ENCODE measurements at regions of chr22 and their contacts with region 1.

Region 1: GRCh38 chr22:37965940-37966664 is 12.6 kb downstream of the POLR2F start:
- DNase-seq: no peak
- H3K4me3 ChIP-seq: no peak overlapping the region
- H3K27ac ChIP-seq: no peak overlapping the region
- H3K4me1 ChIP-seq: peaks cover 0 to 5% (median 3%) of the 10 kb centered on the region in 4 experiments; a peak in 4 of 7 replicates
- H3K27me3 ChIP-seq: no peaks in the 10 kb centered on the region
- CTCF ChIP-seq: no peak
- EP300 ChIP-seq: no peak
- POLR2A ChIP-seq: no peak
- RAD21 ChIP-seq: no peak

Region 2: GRCh38 chr22:37896181-37896592 is 69.9 kb before region 1 on chr22:
- CTCF ChIA-PET with region 1: interaction called, 10 read pairs
- POLR2A ChIA-PET with region 1: interaction called, 6 read pairs
- DNase-seq: no peak
- H3K4me3 ChIP-seq: no peak overlapping the region
- H3K27ac ChIP-seq: no peak overlapping the region
- H3K4me1 ChIP-seq: peaks cover 16 to 24% (median 20%) of the 10 kb centered on the region in 4 experiments
- H3K27me3 ChIP-seq: no peaks in the 10 kb centered on the region
- CTCF ChIP-seq: no peak
- EP300 ChIP-seq: no peak
- POLR2A ChIP-seq: no peak
- RAD21 ChIP-seq: no peak

Region 3: GRCh38 chr22:37940698-37941376 is 25.3 kb before region 1 on chr22:
- CTCF ChIA-PET with region 1: interaction called, 11 read pairs
- POLR2A ChIA-PET with region 1: interaction called, 8 read pairs
- DNase-seq: no peak
- H3K4me3 ChIP-seq: no peak overlapping the region
- H3K27ac ChIP-seq: no peak overlapping the region
- H3K4me1 ChIP-seq: no peaks in the 10 kb centered on the region
- H3K27me3 ChIP-seq: no peaks in the 10 kb centered on the region
- CTCF ChIP-seq: 0 out of 4 replicates have a peak, but pooled peaks of 1 of the 3 experiments have one; percentile 7
- EP300 ChIP-seq: no peak
- POLR2A ChIP-seq: no peak
- RAD21 ChIP-seq: no peak

Region 4: GRCh38 chr22:37953437-37954179 is 12.5 kb before region 1 on chr22 and contains the starts of genes C22orf23 and POLR2F:
- CTCF ChIA-PET with region 1: interaction called, 48 read pairs
- POLR2A ChIA-PET with region 1: interaction called, 10 read pairs
- DNase-seq: peak; percentile 71 to 96
- H3K4me3 ChIP-seq: peak within 1 kb of the TSS; percentile 85 to 98 (median 94)
- H3K27ac ChIP-seq: peak within 1 kb of the TSS; percentile 66; the same call in 1 of the 2 replicates
- H3K4me1 ChIP-seq: peaks cover 0 to 10% (median 4%) of the 10 kb centered on the region in 4 experiments; a peak in 4 of 7 replicates
- H3K27me3 ChIP-seq: no peaks in the 10 kb centered on the region; a peak in 4 of 7 replicates
- CTCF ChIP-seq: no peak
- EP300 ChIP-seq: no peak
- POLR2A ChIP-seq: peak in 1 of 2 experiments; percentile 62; a peak in 2 of 3 replicates
- RAD21 ChIP-seq: no peak
- total RNA-seq, gene C22orf23: 0.21 and 0.54 TPM in 2 replicates
- total RNA-seq, gene POLR2F: 150 and 160 TPM in 2 replicates